ENCODE measurements at regions of chr7 and their contacts with region 1.

Region 1: GRCh38 chr7:2295936-2296620 is 18.2 kb downstream of the SNX8 start:
- DNase-seq: no peak
- ATAC-seq: no peak
- H3K4me3 ChIP-seq: no peak overlapping the region
- H3K4me3 Mint-ChIP-seq: no peak overlapping the region
- H3K27ac ChIP-seq: no peak overlapping the region
- H3K27ac Mint-ChIP-seq: no peak overlapping the region
- H3K4me1 ChIP-seq: no peaks in the 10 kb centered on the region
- H3K4me1 Mint-ChIP-seq: peaks cover 5% of the 10 kb centered on the region
- H3K27me3 ChIP-seq: no peaks in the 10 kb centered on the region
- H3K27me3 Mint-ChIP-seq: no peaks in the 10 kb centered on the region
- CTCF ChIP-seq: no peak

Region 2: DNA sequence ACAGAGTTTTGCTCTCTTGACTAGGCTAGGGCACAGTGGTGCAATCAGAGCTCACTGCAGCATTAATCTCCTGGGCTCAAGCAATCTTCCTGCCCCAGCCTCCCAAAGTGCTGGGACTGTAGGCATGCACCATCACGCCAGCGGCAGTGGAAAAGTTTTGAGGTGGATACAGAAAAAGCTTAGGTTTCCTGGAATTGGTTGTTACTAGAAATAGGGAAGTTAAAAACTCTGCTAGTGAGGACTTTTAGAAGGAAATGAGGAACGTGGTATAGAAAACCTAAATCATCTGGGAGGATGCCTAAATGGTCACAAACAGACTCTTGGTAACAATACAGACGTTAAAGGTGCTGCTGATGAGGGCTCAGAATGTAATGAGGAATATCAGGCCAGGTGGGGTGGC is 29.1 kb after region 1 on chr7:
- CTCF ChIA-PET with region 1: no interaction called
- POLR2A ChIA-PET with region 1: no interaction called
- intact Hi-C with region 1: loop called in 1 of 2 experiments (anchors 2 kb)
- DNase-seq: no peak
- ATAC-seq: no peak
- H3K4me3 ChIP-seq: no peak overlapping the region
- H3K4me3 Mint-ChIP-seq: no peak overlapping the region
- H3K27ac ChIP-seq: no peak overlapping the region
- H3K27ac Mint-ChIP-seq: no peak overlapping the region
- H3K4me1 ChIP-seq: no peaks in the 10 kb centered on the region
- H3K4me1 Mint-ChIP-seq: no peaks in the 10 kb centered on the region
- H3K27me3 ChIP-seq: peaks cover 0 to 3% of the 10 kb centered on the region in 2 experiments
- H3K27me3 Mint-ChIP-seq: peaks cover 5% of the 10 kb centered on the region
- CTCF ChIP-seq: no peak